ENCODE measurements at regions of chr9 and their contacts with region 1.

Region 1: DNA sequence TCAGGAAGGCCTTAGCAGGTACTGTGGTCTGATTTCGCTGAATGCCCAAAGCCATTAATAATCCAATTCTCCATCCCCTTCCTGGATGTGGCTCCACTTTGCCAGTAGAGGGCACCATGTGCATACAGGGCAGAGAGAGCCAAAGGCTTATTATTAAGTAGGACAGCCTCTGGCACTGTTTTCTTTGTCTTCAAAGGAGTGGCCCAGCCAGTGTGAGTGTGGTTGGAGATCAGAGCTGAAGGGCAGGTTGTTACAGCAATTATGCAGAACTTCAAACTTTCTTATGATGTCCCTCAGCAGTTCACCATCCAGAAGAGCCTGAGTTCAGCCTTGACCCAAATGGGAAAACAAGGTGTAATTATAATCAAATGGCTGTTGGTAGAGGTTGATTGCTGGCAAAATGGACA is 38.6 kb upstream of the CEMIP2 start:
- DNase-seq: peak; percentile 62
- CTCF ChIP-seq: peak; percentile 84

Region 2: DNA sequence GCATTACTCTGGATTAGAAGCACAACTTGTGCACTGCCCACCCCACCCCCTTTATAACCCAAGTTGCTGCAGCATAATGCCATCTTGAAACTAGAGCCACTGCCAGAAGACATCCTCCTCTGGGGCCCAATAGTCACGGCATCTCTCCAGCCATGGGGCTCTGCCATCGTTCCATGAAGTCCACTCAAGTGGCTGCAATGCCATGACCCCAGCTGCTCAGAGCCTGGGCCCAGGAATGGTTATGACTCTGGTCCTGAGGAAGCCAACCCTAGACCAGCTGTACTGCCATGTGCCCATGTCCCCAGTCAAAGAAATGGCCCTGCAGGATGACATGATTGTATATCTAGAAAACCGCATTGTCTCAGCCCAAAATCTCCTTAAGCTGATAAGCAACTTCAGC is 310.6 kb before region 1 on chr9:
- CTCF ChIA-PET with region 1: no interaction called
- POLR2A ChIA-PET with region 1: no interaction called
- DNase-seq: no peak
- CTCF ChIP-seq: no peak

Region 3: DNA sequence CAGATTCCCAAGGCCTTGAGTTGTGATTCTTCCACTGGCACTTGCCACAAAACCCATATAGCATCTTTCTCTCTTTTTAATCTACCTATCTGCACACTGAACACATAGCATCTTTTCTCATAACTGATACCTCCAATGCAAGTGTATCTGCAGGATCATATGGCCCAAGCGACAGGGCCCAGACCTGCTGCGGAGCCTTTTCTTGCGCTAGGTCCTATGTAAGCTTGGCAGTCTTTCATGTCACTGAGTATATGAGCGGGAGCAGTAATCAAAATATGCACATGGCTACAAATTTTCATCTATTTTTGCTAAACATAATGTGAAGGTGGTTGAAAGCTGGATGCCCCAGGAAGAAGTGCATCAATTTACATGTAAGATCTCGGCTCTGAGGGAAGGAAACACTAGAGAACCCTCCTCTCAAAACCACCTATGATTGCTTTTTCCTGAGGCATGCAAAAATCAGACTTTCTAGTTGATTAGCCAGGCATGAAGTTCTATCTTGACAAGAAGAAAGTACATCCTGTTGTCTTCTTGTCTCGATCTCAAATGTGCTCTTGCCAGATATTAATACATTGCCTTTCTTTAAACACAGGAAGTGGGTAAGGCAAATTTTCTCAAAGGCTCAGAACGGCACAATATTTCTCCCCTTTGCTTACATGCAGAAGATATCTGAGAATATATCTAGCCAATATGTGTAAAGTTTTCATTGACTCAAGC is 11.6 kb before region 1 on chr9:
- CTCF ChIA-PET with region 1: interaction called, 22 read pairs
- POLR2A ChIA-PET with region 1: no interaction called
- DNase-seq: peak; percentile 55
- CTCF ChIP-seq: no peak

Region 4: GRCh38 chr9:72338631-72339030 is 531.7 kb after region 1 on chr9:
- CTCF ChIA-PET with region 1: no interaction called
- POLR2A ChIA-PET with region 1: no interaction called
- DNase-seq: no peak
- CTCF ChIP-seq: no peak

Measured in GM10248 (cell line).